ENCODE measurements at regions of chr17 and their contacts with region 1.

Region 1: GRCh38 chr17:68398691-68399637 is 58.3 kb downstream of the WIPI1 start:
- DNase-seq: peak; percentile 59
- H3K4me3 ChIP-seq: no peak overlapping the region
- H3K27ac ChIP-seq: no peak overlapping the region
- H3K4me1 ChIP-seq: no peaks in the 10 kb centered on the region
- H3K27me3 ChIP-seq: no peaks in the 10 kb centered on the region
- CTCF ChIP-seq: peak; percentile 63 to 84 (median 78)
- POLR2A ChIP-seq: no peak

Region 2: DNA sequence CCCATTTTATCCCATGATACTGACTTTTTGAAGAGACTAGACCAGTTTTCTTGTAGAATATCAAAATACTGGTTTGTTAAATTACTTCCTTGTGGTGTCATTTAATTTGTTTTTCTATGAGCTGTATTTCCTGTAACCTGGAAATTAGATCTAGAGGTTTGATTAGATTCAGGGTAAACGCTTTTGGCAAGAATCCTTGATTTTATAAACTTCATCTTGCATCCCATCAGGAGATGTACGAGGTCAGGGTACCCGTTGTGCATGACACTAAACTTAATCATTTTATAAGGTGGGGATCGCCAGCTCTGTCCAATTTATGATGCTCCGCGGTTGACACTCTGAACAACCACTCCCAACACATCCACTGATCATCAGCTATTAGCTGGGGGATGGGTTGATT is 59.4 kb before region 1 on chr17:
- intact Hi-C with region 1: no loop called
- DNase-seq: no peak
- H3K4me3 ChIP-seq: no peak overlapping the region
- H3K27ac ChIP-seq: no peak overlapping the region
- H3K4me1 ChIP-seq: no peaks in the 10 kb centered on the region
- H3K27me3 ChIP-seq: no peaks in the 10 kb centered on the region
- CTCF ChIP-seq: no peak
- POLR2A ChIP-seq: no peak

Region 3: DNA sequence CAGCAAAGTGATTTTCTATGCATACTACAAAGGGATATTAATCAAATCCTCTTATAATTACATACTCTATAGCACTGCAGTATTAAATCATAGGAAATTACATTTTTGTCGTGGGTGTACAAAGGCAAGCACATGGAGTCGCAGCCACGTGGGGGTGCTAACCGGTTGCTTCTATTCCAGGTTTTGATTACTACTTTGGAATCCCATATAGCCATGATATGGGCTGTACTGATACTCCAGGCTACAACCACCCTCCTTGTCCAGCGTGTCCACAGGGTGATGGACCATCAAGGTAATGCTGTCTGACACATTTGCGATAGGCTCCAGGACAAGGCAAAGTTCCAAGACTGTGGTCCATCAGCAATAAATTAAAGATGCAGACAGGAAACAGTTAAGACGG is 47.6 kb before region 1 on chr17:
- intact Hi-C with region 1: loop called (anchors 5 kb)
- DNase-seq: no peak
- H3K4me3 ChIP-seq: no peak overlapping the region
- H3K27ac ChIP-seq: no peak overlapping the region
- H3K4me1 ChIP-seq: no peaks in the 10 kb centered on the region
- H3K27me3 ChIP-seq: no peaks in the 10 kb centered on the region
- CTCF ChIP-seq: peak in 1 of 4 experiments; percentile 27
- POLR2A ChIP-seq: no peak

Region 4: DNA sequence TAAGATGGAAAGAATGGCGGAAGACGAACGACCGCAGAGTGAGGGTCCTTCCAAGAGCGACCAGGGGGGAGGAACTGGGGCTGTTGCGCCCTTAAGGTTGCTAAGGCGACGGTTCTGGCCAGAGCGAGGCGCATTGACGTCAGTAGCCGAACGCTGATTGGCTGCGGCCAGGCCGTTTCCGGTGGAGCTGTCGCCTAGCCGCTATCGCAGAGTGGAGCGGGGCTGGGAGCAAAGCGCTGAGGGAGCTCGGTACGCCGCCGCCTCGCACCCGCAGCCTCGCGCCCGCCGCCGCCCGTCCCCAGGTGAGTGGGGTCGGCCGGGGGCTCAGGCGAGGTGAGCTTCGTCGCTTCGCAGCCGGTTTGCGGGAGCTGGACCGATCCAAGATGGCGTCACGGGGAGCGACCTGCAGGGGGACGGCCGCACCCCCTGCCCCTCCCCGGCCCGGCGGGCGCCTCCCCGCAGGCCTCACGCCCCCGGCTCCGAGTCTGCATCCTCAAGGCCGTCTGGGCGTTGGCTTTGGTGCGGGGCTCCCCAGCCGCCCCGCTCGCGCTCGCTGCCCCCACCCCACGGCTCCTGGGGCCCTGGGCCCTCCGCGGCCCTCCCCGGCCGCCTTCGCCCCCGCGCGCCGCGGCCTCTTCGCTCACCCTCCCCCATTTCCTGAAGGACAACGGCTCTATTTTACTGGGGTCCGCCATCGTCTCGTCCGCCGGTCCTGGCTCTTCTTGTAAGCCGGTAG is 113.5 kb after region 1 on chr17 and contains the start of gene PRKAR1A:
- intact Hi-C with region 1: no loop called
- DNase-seq: peak; percentile 96
- H3K4me3 ChIP-seq: peak within 1 kb of the TSS; percentile 85 to 94
- H3K27ac ChIP-seq: peak within 1 kb of the TSS; percentile 98
- H3K4me1 ChIP-seq: no peaks in the 10 kb centered on the region
- H3K27me3 ChIP-seq: no peaks in the 10 kb centered on the region
- CTCF ChIP-seq: peak in 1 of 4 experiments; percentile 42
- POLR2A ChIP-seq: peak; percentile 90
- total RNA-seq, gene PRKAR1A: 296 to 409 TPM

Region 5: DNA sequence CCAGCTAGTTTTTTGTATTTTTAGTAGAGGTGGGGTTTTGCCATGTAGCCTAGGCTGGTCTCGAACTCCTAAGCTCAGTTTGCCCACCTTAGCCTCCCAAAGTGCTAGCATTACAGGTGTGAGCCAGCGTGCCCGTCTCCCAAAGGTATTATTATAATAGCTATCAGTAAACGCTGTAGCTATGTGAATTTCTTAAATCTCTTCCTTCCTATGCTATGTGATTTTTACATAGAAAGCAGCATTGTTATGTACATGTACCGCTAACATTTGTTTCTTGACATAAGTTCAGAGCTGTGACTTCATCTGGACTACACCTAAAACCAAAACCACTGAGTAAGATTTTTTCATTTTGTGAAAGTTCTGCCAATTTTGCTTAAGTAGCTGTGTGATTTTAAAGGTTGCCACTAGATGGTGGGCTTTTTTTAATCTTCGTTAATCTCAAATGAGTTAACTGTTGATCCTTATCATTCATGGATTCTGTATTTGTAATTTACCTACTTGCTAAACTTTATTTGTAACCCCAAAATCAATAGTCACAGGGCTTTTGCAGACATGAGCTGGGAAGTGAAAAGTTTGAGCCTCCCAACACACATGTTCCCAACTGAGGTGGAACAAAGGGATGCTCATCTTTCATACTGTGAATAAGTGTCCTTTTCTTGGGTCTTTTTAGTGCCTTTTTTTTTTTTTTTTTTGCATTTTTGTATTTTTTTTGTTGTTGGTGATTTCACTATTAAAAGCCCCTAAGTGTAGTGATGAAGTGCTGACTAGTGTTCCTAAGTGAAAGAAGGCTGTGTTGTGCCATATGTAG is 135.1 kb after region 1 on chr17:
- intact Hi-C with region 1: no loop called
- DNase-seq: no peak
- H3K4me3 ChIP-seq: no peak overlapping the region
- H3K27ac ChIP-seq: no peak overlapping the region
- H3K4me1 ChIP-seq: no peaks in the 10 kb centered on the region
- H3K27me3 ChIP-seq: no peaks in the 10 kb centered on the region
- CTCF ChIP-seq: peak in 2 of 4 experiments; percentile 38 to 51
- POLR2A ChIP-seq: no peak